GM10248 (cell line): ENCODE measurements at regions of chr20 and their contacts with region 1.

Region 1: GRCh38 chr20:8043687-8044282 is 24.2 kb upstream of the TMX4 start:
- DNase-seq: peak; percentile 57
- CTCF ChIP-seq: peak; percentile 66

Region 2: DNA sequence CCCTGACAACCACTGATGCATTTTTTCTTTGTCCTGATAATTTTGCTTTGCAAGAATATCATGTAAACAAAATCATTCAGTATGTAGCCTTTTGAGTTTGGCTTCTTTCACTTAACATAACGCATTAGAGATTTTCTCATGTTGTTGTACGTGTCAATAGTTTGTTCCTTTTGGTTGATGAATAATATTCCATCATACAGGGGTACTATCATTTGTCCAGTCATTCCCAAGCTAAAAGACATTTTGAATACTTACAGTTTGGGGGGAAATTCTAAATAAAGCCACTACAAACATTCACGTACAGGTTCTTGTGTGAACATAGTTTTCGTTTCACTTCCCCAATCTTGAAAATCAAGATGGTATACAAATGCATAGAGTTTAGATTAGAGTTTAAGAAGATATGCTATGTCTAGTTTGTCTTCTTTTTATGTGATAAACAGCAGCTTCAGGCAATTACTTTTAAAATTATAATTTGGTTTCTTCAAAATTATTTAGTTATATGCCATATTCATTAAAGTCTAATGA is 108.7 kb before region 1 on chr20:
- CTCF ChIA-PET with region 1: interaction called, 10 read pairs
- POLR2A ChIA-PET with region 1: no interaction called
- DNase-seq: peak; percentile 32
- CTCF ChIP-seq: no peak

Region 3: GRCh38 chr20:8020314-8021079 is 23.3 kb before region 1 on chr20:
- CTCF ChIA-PET with region 1: interaction called, 25 read pairs
- POLR2A ChIA-PET with region 1: no interaction called
- DNase-seq: peak; percentile 26
- CTCF ChIP-seq: no peak

Region 4: GRCh38 chr20:8033151-8033841 is 10.5 kb before region 1 on chr20:
- CTCF ChIA-PET with region 1: interaction called, 37 read pairs
- POLR2A ChIA-PET with region 1: no interaction called
- DNase-seq: no peak
- CTCF ChIP-seq: no peak

Region 5: DNA sequence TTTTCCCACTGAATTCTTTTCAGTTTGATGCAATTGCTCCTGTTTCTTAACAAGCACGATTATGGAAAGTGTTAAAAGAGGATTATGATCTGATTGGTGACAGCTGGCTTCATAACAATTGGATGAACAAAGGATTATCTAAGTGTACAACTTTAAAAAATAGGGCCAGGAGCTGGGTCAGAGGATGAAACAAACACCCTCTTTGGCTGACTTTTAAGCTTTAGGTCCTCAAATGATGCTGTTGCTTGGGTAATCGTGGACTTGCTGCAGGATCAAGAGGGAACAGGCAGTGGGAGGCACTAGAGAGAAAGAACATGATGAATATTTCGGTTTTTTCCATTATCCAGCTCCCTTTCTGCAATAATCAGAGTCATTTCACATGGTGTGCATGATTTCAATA is 11.3 kb after region 1 on chr20:
- CTCF ChIA-PET with region 1: interaction called, 22 read pairs
- POLR2A ChIA-PET with region 1: no interaction called
- DNase-seq: no peak
- CTCF ChIP-seq: no peak

Region 6: DNA sequence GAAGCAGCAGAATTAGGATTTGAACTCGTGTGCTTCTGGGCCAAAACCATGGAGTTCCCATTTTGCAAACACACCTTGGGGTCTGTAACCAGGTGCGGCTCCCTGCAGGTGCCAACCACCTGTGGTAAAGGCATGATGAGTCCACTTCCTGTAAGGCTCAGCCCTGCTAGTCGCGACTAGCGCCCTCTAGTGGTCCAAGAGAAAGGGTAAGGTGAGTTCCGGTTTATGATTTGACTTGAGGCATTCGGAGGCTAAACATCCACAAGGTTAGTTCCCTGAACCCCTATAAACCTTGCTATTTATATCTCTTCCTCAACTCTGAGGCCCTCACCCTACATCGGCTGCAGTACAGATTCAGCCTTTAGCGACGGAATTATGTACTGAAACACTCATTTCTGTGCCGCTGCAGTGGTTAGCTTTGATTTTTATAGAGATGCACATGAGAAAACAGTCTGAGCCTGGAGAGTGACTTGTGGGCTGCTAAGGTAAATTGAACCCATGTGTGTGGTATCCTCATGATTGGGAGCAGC is 261.7 kb after region 1 on chr20:
- CTCF ChIA-PET with region 1: interaction called, 13 read pairs
- POLR2A ChIA-PET with region 1: no interaction called
- DNase-seq: peak; percentile 43
- CTCF ChIP-seq: peak; percentile 69

Region 7: DNA sequence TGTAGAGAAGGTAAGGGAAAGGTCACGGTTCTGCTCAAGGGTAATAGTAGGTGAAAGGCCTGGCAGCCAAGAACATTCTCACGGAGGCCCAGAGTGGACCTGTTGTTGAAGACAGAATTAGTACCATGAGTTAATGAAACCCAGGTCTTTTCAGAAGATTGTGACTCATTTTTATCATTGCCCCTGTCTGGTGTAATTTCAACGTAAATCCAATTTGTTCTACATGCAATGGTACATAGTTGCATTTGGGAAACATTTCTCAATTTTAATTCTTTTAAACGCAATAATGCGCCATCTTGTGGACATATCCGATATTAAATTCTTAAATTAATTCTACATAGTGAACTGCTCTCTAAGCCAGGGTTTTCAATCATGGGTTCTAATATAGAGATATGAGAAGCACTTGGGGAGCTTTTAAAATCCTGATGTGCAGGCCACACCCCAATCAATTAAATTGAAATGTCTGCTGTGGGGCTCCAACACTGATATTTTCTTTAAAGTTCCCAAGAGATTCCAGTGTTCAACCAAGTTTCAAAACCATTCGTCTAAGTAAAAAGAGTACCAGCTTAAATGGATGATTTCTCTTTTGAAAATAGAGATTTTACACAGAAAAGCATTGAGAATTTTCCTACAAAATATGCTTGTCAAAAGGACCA is 345.7 kb after region 1 on chr20:
- CTCF ChIA-PET with region 1: interaction called, 19 read pairs
- POLR2A ChIA-PET with region 1: no interaction called
- DNase-seq: peak; percentile 11
- CTCF ChIP-seq: no peak